GM12878 (cell line): ENCODE measurements at regions of chr12 and their contacts with region 1.

Region 1: DNA sequence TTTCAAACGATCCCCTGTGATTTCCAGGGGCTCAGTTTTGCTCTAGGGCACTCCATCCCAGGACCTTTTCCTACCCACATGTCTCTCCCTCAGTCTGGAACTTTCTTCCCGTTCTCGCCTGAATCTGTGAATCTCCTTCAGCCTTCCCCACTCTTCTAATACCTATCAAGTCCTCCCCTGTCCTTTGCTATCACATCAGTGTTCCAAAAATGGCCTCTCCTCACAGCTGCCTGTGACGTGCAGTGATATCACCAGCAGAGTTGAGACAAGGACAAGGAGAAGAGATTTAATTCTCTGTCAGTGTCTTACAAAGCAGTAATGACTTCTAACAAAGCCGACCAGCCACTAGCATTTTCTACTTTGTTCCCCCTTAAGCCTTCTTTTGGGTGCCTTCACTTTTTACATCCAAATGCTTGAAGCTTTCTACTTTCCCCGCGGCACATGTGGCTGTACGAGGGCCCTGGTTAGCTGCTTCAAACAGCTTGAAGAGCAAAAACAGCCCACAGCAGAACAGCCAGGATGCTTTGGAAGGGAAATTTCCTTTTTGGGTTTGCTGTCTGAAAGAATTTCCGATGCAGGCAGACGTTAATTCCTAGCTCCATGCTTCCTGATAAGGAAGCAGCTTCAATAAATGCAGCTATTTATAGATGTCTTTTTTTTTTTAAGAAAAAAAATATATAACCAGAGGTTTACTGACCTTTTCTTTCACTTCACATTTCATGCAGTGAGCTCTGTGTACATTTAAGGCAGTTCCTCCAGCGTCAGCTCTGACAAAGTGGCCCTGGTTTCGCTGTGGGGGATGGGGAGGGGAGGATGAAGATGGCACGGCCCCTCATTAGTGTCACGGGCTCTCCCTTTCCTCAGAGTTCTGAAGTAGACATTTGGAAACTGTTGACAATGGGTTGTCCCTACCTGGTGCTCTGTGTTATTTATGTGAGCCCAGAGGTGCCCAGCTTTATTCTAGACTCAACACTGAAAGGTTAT is 109.3 kb downstream of the ETV6 start:
- DNase-seq: peak; percentile 93
- ATAC-seq: peak; percentile 76
- H3K4me3 ChIP-seq: no peak overlapping the region; the same call in 1 of the 2 replicates
- H3K27ac ChIP-seq: peak overlapping the region; percentile 100
- H3K4me1 ChIP-seq: peaks cover 70% of the 10 kb centered on the region
- H3K27me3 ChIP-seq: no peaks in the 10 kb centered on the region
- CTCF ChIP-seq: no peak
- EP300 ChIP-seq: peak; percentile 78 to 91; a peak in 1 of 4 replicates
- POLR2A ChIP-seq: peak; percentile 63
- RAD21 ChIP-seq: peak; percentile 17; the same call in 1 of the 2 replicates

Region 2: DNA sequence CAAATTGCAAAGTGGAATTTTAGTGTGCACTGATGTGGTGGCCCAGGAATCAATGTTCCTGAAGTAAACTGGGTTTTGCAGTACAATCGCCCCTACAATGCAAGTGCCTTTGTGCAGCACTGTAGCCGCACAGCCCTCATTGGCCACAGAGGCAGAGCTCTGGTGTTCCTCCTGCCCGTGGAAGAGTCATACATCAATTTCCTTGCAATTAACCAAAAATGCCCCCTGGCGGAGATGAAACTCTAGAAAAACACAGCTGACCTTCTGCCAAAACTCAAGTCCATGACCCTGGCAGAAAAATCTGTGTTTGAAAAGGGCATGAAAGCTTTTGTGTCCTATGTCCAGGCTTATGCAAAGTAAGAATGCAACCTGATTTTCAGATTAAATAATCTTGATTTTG is 245.5 kb before region 1 on chr12:
- CTCF ChIA-PET with region 1: no interaction called
- POLR2A ChIA-PET with region 1: no interaction called
- RAD21 ChIA-PET with region 1: no interaction called
- SMC1A ChIA-PET with region 1: no interaction called
- in situ Hi-C with region 1: no loop called
- intact Hi-C with region 1: no loop called
- DNase-seq: no peak
- ATAC-seq: no peak
- H3K4me3 ChIP-seq: no peak overlapping the region
- H3K27ac ChIP-seq: no peak overlapping the region
- H3K4me1 ChIP-seq: no peaks in the 10 kb centered on the region
- H3K27me3 ChIP-seq: no peaks in the 10 kb centered on the region
- CTCF ChIP-seq: 0 out of 6 replicates have a peak, but pooled peaks of 1 of the 3 experiments have one; percentile 11
- EP300 ChIP-seq: no peak
- POLR2A ChIP-seq: no peak
- RAD21 ChIP-seq: 0 out of 2 replicates have a peak, but pooled peaks have one; percentile 22

Region 3: GRCh38 chr12:11568762-11569478 is 189.9 kb before region 1 on chr12:
- CTCF ChIA-PET with region 1: no interaction called
- POLR2A ChIA-PET with region 1: interaction called, 12 read pairs
- RAD21 ChIA-PET with region 1: interaction called, 8 read pairs
- SMC1A ChIA-PET with region 1: interaction called, 14 read pairs
- in situ Hi-C with region 1: no loop called
- intact Hi-C with region 1: loop called (anchors 1 kb)
- DNase-seq: peak; percentile 96
- ATAC-seq: peak; percentile 77
- H3K4me3 ChIP-seq: peak overlapping the region; percentile 48
- H3K27ac ChIP-seq: peak overlapping the region; percentile 98
- H3K4me1 ChIP-seq: peaks cover 46% of the 10 kb centered on the region
- H3K27me3 ChIP-seq: no peaks in the 10 kb centered on the region
- CTCF ChIP-seq: no peak
- EP300 ChIP-seq: peak; percentile 99
- POLR2A ChIP-seq: no peak
- RAD21 ChIP-seq: no peak

Region 4: GRCh38 chr12:11639454-11639853 is 119.3 kb before region 1 on chr12:
- CTCF ChIA-PET with region 1: no interaction called
- POLR2A ChIA-PET with region 1: no interaction called
- RAD21 ChIA-PET with region 1: no interaction called
- SMC1A ChIA-PET with region 1: no interaction called
- in situ Hi-C with region 1: no loop called
- intact Hi-C with region 1: no loop called
- DNase-seq: no peak
- ATAC-seq: no peak
- H3K4me3 ChIP-seq: no peak overlapping the region
- H3K27ac ChIP-seq: no peak overlapping the region
- H3K4me1 ChIP-seq: no peaks in the 10 kb centered on the region
- H3K27me3 ChIP-seq: no peaks in the 10 kb centered on the region
- CTCF ChIP-seq: no peak
- EP300 ChIP-seq: no peak
- POLR2A ChIP-seq: no peak
- RAD21 ChIP-seq: no peak

Region 5: GRCh38 chr12:11658791-11659190 is 100.0 kb before region 1 on chr12:
- CTCF ChIA-PET with region 1: no interaction called
- POLR2A ChIA-PET with region 1: interaction called, 4 read pairs
- RAD21 ChIA-PET with region 1: interaction called, 37 read pairs
- SMC1A ChIA-PET with region 1: interaction called, 27 read pairs
- in situ Hi-C with region 1: loop called (anchors 5 kb)
- intact Hi-C with region 1: loop called (anchors 2 kb)
- DNase-seq: no peak
- ATAC-seq: no peak
- H3K4me3 ChIP-seq: no peak overlapping the region
- H3K27ac ChIP-seq: no peak overlapping the region
- H3K4me1 ChIP-seq: peaks cover 23% of the 10 kb centered on the region
- H3K27me3 ChIP-seq: no peaks in the 10 kb centered on the region
- CTCF ChIP-seq: no peak
- EP300 ChIP-seq: no peak
- POLR2A ChIP-seq: no peak
- RAD21 ChIP-seq: no peak

Region 6: DNA sequence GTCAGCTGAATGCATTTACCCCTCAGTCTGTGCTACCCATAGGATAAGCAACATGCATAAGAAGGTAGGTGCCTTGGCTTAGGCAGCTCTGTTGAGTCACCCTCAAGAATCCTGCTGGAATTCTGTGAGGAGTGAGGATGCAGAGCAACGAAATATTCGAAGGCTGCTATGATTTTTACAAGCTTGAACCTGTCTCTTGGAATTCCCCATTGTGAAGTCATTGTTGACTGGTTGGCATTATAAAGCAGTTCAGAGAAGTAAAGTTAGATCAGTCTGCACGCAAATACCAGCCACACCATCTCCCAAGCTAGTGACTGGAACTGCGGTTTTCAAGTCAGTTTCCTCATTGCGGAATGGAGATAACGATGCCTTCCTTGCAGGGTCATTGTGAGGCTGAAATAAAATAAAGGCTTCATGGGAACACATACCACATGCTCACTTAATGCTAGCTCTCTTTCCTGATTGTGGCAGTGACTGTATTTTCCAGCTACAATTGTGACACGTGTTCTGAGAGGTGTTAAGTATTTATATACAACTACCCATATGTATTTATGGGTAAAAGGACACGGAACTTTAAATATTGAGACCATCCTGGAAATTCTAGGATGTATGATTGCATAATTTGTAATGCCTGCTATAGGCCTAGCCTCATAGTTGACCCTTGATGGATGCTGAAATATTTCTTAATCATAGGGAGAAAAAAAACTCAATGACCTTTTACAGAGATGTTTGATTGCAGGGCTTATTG is 12.6 kb before region 1 on chr12:
- CTCF ChIA-PET with region 1: interaction called, 46 read pairs
- POLR2A ChIA-PET with region 1: interaction called, 144 read pairs
- RAD21 ChIA-PET with region 1: interaction called, 399 read pairs
- SMC1A ChIA-PET with region 1: interaction called, 1,116 read pairs
- in situ Hi-C with region 1: no loop called
- intact Hi-C with region 1: loop called (anchors 1 kb)
- DNase-seq: peak; percentile 93
- ATAC-seq: peak; percentile 57
- H3K4me3 ChIP-seq: peak overlapping the region; percentile 17; the same call in 1 of the 2 replicates
- H3K27ac ChIP-seq: peak overlapping the region; percentile 100
- H3K4me1 ChIP-seq: peaks cover 88% of the 10 kb centered on the region
- H3K27me3 ChIP-seq: no peaks in the 10 kb centered on the region
- CTCF ChIP-seq: no peak
- EP300 ChIP-seq: peak; percentile 91 to 94
- POLR2A ChIP-seq: peak; percentile 46; the same call in 1 of the 2 replicates
- RAD21 ChIP-seq: peak; percentile 12; the same call in 1 of the 2 replicates

Region 7: GRCh38 chr12:11812586-11813427 is 54.0 kb after region 1 on chr12:
- CTCF ChIA-PET with region 1: interaction called, 4 read pairs
- POLR2A ChIA-PET with region 1: interaction called, 3 read pairs
- RAD21 ChIA-PET with region 1: interaction called, 71 read pairs
- SMC1A ChIA-PET with region 1: interaction called, 148 read pairs
- in situ Hi-C with region 1: no loop called
- intact Hi-C with region 1: loop called (anchors 2 kb)
- DNase-seq: no peak
- ATAC-seq: peak; percentile 89
- H3K4me3 ChIP-seq: peak overlapping the region; percentile 61
- H3K27ac ChIP-seq: peak overlapping the region; percentile 93
- H3K4me1 ChIP-seq: peaks cover 41% of the 10 kb centered on the region
- H3K27me3 ChIP-seq: no peaks in the 10 kb centered on the region
- CTCF ChIP-seq: peak; percentile 19 to 38 (median 20); a peak in 4 of 6 replicates
- EP300 ChIP-seq: no peak
- POLR2A ChIP-seq: peak; percentile 40; the same call in 1 of the 2 replicates
- RAD21 ChIP-seq: peak; percentile 34; the same call in 1 of the 2 replicates

Region 8: GRCh38 chr12:11981121-11981733 is 222.4 kb after region 1 on chr12:
- CTCF ChIA-PET with region 1: interaction called, 3 read pairs
- POLR2A ChIA-PET with region 1: interaction called, 3 read pairs
- RAD21 ChIA-PET with region 1: interaction called, 10 read pairs
- SMC1A ChIA-PET with region 1: interaction called, 7 read pairs
- in situ Hi-C with region 1: no loop called
- intact Hi-C with region 1: no loop called
- DNase-seq: peak; percentile 98
- ATAC-seq: peak; percentile 90
- H3K4me3 ChIP-seq: peak overlapping the region; percentile 19; the same call in 1 of the 2 replicates
- H3K27ac ChIP-seq: peak overlapping the region; percentile 96
- H3K4me1 ChIP-seq: peaks cover 23% of the 10 kb centered on the region
- H3K27me3 ChIP-seq: no peaks in the 10 kb centered on the region
- CTCF ChIP-seq: no peak
- EP300 ChIP-seq: peak; percentile 99
- POLR2A ChIP-seq: no peak
- RAD21 ChIP-seq: peak; percentile 26; the same call in 1 of the 2 replicates